ENCODE measurements at regions of chr1 and their contacts with region 1.

Region 1: DNA sequence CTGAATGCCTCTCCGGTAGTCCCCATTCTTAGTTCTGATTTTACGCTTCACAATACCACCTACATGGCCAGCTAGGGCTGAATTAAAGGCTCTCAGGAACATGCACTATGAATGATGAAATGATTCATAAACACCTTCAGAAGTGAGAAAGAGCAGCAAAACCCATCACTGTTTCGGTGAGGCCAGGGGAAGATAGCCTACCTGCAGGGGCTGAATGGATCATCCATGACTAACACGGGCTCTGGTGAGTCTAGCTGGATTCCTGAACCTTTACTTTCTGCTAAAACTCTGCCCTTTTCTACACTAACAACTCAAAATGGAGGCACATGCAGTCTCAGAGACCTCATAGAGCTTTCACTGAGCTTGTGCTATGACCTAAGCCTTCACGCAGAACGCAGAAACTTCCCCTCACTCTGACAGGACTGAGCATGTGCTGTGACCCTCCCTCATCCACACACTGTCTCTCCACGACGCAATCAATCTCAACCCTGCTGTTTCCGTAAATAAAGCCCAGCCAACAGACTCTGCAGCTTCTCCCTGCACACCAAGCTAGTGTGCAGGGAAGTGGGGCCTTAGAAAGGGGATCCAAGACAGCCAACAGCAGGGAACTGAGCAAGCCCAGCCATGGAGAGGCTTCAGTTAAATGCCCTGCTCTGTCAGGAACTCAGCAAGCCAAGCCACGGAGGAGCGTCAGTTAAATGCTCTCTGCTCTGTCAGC is 207.8 kb downstream of the SLC45A1 start:
- DNase-seq: peak; percentile 83
- ATAC-seq: peak; percentile 89
- H3K4me3 Mint-ChIP-seq: no peak overlapping the region
- H3K27ac Mint-ChIP-seq: no peak overlapping the region
- H3K4me1 Mint-ChIP-seq: peaks cover 44% of the 10 kb centered on the region
- H3K27me3 Mint-ChIP-seq: no peaks in the 10 kb centered on the region
- CTCF ChIP-seq: no peak

Region 2: GRCh38 chr1:8329439-8329838 is 196.3 kb before region 1 on chr1:
- CTCF ChIA-PET with region 1: no interaction called
- POLR2A ChIA-PET with region 1: no interaction called
- intact Hi-C with region 1: no loop called
- DNase-seq: no peak
- ATAC-seq: no peak
- H3K4me3 Mint-ChIP-seq: no peak overlapping the region
- H3K27ac Mint-ChIP-seq: no peak overlapping the region
- H3K4me1 Mint-ChIP-seq: no peaks in the 10 kb centered on the region
- H3K27me3 Mint-ChIP-seq: no peaks in the 10 kb centered on the region
- CTCF ChIP-seq: no peak

Region 3: DNA sequence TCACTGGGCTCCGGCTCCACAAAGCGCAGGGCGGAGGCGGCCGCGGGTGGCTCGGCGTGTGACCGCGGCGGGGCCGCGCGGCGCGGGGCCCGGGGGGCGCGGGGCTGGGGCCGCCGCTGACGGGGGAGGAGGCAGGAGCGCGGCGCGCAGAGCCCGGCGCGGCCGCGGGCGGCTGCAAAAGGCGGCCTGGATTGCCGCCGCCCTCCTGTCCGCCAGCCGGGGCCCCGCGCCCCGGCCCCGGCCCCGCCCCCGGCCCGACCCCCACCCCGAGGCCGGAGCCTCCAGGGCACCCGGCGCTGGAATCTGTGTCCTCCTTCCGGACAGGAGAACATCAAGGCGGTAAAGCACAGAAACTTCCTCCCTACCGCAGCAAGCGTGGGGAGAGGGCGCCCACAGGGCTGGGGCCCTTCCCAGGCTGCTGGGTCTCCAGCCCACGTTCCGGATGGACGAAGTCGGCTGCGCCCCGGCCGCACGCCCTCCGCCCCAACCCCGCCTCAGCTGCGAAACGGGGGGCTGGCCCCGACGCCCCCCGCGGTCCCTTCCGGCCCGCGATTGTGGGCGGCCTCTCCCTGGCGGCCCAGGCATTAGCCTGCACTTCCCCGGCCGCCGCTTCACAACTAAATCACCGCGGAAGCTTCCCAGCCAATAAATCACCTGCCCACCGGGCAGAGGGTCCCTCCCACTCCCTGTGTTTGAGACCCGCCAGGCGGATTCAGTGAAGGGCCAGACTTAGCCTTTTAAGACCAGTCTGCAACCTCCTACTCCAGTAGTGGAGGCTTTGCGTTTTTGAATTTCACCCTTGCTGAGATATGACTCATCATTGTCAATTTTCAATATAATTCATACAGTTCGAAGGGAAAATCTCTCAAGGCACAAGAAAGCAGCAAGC is 101.8 kb before region 1 on chr1:
- CTCF ChIA-PET with region 1: interaction called, 5 read pairs
- POLR2A ChIA-PET with region 1: interaction called, 6 read pairs
- intact Hi-C with region 1: loop called (anchors 5 kb)
- DNase-seq: peak; percentile 81
- ATAC-seq: peak; percentile 68
- H3K4me3 Mint-ChIP-seq: peak overlapping the region; percentile 77
- H3K27ac Mint-ChIP-seq: peak overlapping the region; percentile 93
- H3K4me1 Mint-ChIP-seq: peaks cover 41% of the 10 kb centered on the region
- H3K27me3 Mint-ChIP-seq: no peaks in the 10 kb centered on the region
- CTCF ChIP-seq: no peak

Region 4: DNA sequence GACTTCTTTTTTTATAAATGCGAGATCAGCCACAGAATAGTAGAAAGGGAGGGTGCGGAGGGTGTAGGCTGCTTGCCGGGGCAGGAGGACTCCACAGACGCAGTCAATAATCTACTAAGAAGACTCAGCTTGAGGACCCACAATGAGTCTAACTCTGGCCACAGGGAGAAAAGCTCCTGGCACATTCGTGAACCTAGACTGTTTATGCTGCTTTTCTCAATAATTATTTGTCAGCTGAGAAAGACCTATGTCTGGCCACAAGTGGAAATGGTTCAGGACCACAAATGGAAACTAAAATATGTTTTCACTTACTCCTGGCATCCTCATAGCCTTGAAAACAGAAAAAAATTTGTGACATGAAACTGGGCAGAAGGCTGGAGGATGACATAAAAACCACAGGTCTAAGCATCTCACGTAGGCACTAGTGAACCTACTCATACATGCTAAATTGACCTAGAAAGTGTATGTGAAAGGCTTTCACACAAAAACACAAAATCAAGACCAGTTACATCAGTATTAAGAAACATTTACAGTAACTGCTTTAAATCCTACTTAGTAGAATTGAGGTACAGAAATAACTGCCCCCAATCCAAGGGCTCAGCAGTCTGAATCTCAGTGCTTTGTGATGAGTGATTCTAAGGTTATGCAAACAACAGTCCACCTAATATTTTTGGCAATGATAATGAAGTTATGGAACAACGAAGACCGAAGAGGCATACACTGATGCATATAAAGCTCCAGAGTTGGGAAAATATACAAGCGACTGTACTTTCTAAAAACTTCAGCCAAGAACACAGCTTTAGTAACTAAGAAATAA is 48.3 kb before region 1 on chr1:
- CTCF ChIA-PET with region 1: no interaction called
- POLR2A ChIA-PET with region 1: interaction called, 5 read pairs
- intact Hi-C with region 1: loop called (anchors 2 kb)
- DNase-seq: peak; percentile 65
- ATAC-seq: peak; percentile 82
- H3K4me3 Mint-ChIP-seq: no peak overlapping the region
- H3K27ac Mint-ChIP-seq: peak overlapping the region; percentile 80
- H3K4me1 Mint-ChIP-seq: peaks cover 50% of the 10 kb centered on the region
- H3K27me3 Mint-ChIP-seq: no peaks in the 10 kb centered on the region
- CTCF ChIP-seq: no peak

Region 5: GRCh38 chr1:8510041-8510823 is 15.5 kb before region 1 on chr1:
- CTCF ChIA-PET with region 1: interaction called, 7 read pairs
- POLR2A ChIA-PET with region 1: interaction called, 6 read pairs
- intact Hi-C with region 1: loop called (anchors 2 kb)
- DNase-seq: peak; percentile 68
- ATAC-seq: peak; percentile 68
- H3K4me3 Mint-ChIP-seq: peak overlapping the region; percentile 73
- H3K27ac Mint-ChIP-seq: peak overlapping the region; percentile 93
- H3K4me1 Mint-ChIP-seq: peaks cover 40% of the 10 kb centered on the region
- H3K27me3 Mint-ChIP-seq: no peaks in the 10 kb centered on the region
- CTCF ChIP-seq: no peak

Region 6: GRCh38 chr1:8671306-8671917 is 145.7 kb after region 1 on chr1:
- CTCF ChIA-PET with region 1: no interaction called
- POLR2A ChIA-PET with region 1: no interaction called
- intact Hi-C with region 1: no loop called
- DNase-seq: peak; percentile 18
- ATAC-seq: no peak
- H3K4me3 Mint-ChIP-seq: no peak overlapping the region
- H3K27ac Mint-ChIP-seq: no peak overlapping the region
- H3K4me1 Mint-ChIP-seq: peaks cover 44% of the 10 kb centered on the region
- H3K27me3 Mint-ChIP-seq: no peaks in the 10 kb centered on the region
- CTCF ChIP-seq: peak; percentile 81

Measured in activated CD8-positive, alpha-beta T cell treated with anti-CD3 and anti-CD28 coated beads for 36 hours (primary cell).